ENCODE measurements at regions of chr4 and their contacts with region 1.

Region 1: GRCh38 chr4:109998867-109999584 is 86.3 kb downstream of the EGF start:
- DNase-seq: peak; percentile 11
- ATAC-seq: peak; percentile 61
- H3K4me3 Mint-ChIP-seq: no peak overlapping the region
- H3K27ac Mint-ChIP-seq: no peak overlapping the region
- H3K4me1 Mint-ChIP-seq: peaks cover 8% of the 10 kb centered on the region
- H3K27me3 Mint-ChIP-seq: peaks cover 8% of the 10 kb centered on the region
- CTCF ChIP-seq: peak; percentile 80

Region 2: DNA sequence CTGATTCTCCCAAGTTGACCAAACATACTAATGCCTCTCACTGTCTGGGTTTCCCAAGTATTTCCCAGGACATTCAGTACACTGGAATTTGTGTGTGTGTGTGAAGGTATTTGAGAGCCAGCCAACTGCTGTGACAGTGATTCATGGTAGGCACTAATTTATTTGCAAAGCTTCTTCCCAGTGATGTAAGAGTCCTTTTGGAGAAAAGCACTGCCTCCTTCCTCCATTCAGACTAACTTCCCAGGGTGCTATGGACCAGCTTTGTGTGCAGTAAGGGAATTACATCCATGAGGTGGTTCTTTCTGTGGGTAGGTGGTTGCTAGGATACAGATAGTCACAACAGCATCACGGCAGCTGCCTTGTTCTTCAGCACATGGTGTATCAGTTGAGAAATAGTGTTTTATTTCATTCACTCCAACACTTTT is 77.6 kb before region 1 on chr4:
- CTCF ChIA-PET with region 1: no interaction called
- POLR2A ChIA-PET with region 1: no interaction called
- intact Hi-C with region 1: no loop called
- DNase-seq: no peak
- ATAC-seq: no peak
- H3K4me3 Mint-ChIP-seq: no peak overlapping the region
- H3K27ac Mint-ChIP-seq: no peak overlapping the region
- H3K4me1 Mint-ChIP-seq: no peaks in the 10 kb centered on the region
- H3K27me3 Mint-ChIP-seq: peaks cover 2% of the 10 kb centered on the region
- CTCF ChIP-seq: no peak

Region 3: GRCh38 chr4:109977854-109978501 is 21.0 kb before region 1 on chr4:
- CTCF ChIA-PET with region 1: interaction called, 11 read pairs
- POLR2A ChIA-PET with region 1: no interaction called
- intact Hi-C with region 1: no loop called
- DNase-seq: no peak
- ATAC-seq: no peak
- H3K4me3 Mint-ChIP-seq: no peak overlapping the region
- H3K27ac Mint-ChIP-seq: no peak overlapping the region
- H3K4me1 Mint-ChIP-seq: no peaks in the 10 kb centered on the region
- H3K27me3 Mint-ChIP-seq: peaks cover 7% of the 10 kb centered on the region
- CTCF ChIP-seq: peak; percentile 51

Region 4: DNA sequence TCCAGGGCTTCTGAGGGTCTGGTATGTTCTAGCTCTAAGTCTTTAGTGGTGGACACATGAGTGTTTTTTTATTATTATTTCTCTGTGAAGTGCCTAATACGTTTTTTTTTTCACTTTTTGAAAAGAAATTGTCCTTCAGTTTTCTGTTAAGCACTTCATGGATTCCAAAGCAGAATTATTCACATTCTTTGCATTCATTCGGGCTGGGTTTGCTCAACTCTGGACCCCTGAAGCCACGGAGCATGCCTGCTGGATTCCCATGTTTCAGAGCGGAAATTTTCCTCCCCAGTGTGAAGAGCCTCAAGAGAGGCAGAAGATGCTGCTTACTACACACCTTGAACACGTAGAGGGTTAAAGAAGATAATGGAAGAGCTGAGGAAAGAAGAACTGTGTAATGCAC is 21.1 kb after region 1 on chr4:
- CTCF ChIA-PET with region 1: interaction called, 10 read pairs
- POLR2A ChIA-PET with region 1: no interaction called
- intact Hi-C with region 1: no loop called
- DNase-seq: no peak
- ATAC-seq: no peak
- H3K4me3 Mint-ChIP-seq: no peak overlapping the region
- H3K27ac Mint-ChIP-seq: no peak overlapping the region
- H3K4me1 Mint-ChIP-seq: peaks cover 12% of the 10 kb centered on the region
- H3K27me3 Mint-ChIP-seq: no peaks in the 10 kb centered on the region
- CTCF ChIP-seq: no peak

Region 5: DNA sequence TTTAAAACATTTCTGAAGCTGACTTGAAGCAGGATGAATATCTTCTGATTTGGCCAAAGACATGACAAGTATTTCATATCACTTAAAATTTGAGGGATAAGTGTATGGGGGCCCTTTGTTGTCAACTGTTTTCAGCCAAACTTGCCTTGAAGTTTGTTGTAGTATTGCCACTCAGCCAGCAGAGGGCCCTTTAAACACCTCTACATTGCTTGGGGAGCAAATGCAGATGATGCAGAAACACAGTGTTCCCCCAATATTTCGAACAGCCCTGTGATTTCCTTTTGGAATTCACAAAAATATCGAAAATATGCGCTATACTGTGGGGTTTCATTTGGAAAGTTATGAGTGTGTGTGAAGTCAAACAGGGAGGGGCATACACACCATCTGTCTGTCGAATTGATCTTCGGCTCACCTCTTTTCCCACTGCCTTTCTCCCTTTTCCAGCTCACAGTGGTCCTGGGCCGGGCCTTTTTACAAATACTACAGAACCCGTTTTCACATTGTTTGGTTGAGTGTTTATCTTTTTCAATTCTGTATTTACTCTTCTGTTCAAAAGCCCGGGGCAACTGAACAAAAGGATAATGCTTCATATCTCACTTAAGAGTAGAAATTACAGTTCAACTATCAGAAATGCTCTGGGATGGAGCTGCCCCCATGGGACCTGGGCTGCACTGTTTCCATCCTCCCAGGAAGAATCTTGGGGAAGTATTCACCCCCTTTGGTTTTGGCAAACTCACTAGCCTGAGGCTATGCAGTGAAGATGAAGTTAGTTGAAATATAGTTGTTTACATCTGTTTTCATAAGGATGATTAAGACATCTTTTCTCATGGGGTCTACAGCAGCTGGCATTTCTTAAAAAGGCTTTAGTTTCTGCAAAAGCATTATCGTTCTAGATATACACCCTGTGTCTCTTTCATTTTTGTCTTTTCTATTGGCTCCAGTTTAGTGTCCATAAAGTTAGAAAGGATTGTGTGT is 51.2 kb after region 1 on chr4:
- CTCF ChIA-PET with region 1: interaction called, 15 read pairs
- POLR2A ChIA-PET with region 1: no interaction called
- intact Hi-C with region 1: no loop called
- DNase-seq: peak; percentile 65
- ATAC-seq: peak; percentile 73
- H3K4me3 Mint-ChIP-seq: no peak overlapping the region
- H3K27ac Mint-ChIP-seq: no peak overlapping the region
- H3K4me1 Mint-ChIP-seq: peaks cover 4% of the 10 kb centered on the region
- H3K27me3 Mint-ChIP-seq: no peaks in the 10 kb centered on the region
- CTCF ChIP-seq: peak; percentile 64

Region 6: GRCh38 chr4:110510955-110511544 is 512.0 kb after region 1 on chr4:
- CTCF ChIA-PET with region 1: interaction called, 194 read pairs
- POLR2A ChIA-PET with region 1: interaction called, 3 read pairs
- intact Hi-C with region 1: loop called (anchors 2 kb)
- DNase-seq: no peak
- ATAC-seq: no peak
- H3K4me3 Mint-ChIP-seq: no peak overlapping the region
- H3K27ac Mint-ChIP-seq: no peak overlapping the region
- H3K4me1 Mint-ChIP-seq: peaks cover 9% of the 10 kb centered on the region
- H3K27me3 Mint-ChIP-seq: peaks cover 1% of the 10 kb centered on the region
- CTCF ChIP-seq: peak; percentile 84

Measured in activated CD8-positive, alpha-beta T cell treated with anti-CD3 and anti-CD28 coated beads for 36 hours (primary cell).